Naive thymus-derived CD4-positive, alpha-beta T cell (primary cell): ENCODE measurements at regions of chr6 and their contacts with region 1.

Region 1: DNA sequence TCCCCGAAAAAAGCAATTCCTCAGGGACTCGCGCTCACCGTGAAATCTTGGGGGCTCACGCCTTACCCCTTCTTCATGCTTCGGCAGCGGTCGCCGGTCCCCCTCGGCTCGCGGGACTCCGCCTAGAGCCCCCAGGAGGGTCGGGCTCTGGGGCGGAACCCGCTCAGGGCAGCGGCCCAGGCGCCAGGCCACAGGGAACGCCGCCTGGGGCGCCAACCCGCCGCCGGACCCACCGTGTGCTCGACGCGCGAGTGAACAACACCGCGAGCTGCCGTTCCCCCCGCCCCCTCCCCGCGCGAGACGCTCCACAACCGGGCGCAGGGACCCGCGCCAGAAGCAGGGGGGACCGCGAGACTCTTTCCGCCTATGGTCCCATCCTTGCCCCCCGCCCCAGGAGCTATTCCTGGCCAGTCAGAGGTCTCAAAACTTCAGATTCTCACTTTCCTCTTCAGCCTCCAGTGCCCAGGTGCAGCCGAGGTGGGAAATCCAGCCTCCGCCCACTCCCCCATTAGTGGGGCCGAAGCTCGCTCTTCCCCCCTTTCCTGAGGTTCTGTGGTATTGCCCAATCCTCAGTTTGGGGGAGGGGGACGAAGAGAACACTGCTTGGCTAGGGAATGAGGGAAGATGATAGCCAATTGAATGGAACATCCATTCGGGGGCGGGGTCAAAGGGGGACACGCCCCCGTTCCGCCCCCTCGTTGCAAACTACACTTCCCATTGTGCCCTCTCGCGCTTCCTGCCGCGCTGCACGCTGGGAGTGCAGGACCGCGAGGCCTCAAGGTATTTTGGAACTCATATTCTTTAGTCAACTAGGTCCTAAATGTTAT is at the start of gene WASF1:
- DNase-seq: peak; percentile 84 to 94 (median 91)
- ATAC-seq: peak; percentile 96
- H3K4me3 ChIP-seq: peak within 1 kb of the TSS; percentile 83
- H3K4me3 Mint-ChIP-seq: peak within 1 kb of the TSS in 6 of 10 donors; percentile 84 to 90 (median 88)
- H3K27ac ChIP-seq: peak within 1 kb of the TSS; percentile 90
- H3K27ac Mint-ChIP-seq: peak within 1 kb of the TSS in 8 of 9 donors; percentile 2 to 87 (median 66)
- H3K4me1 ChIP-seq: peaks cover 17 to 23% of the 10 kb centered on the region in 2 donors
- H3K4me1 Mint-ChIP-seq: peaks cover 4 to 8% (median 5%) of the 10 kb centered on the region in 7 donors
- H3K27me3 ChIP-seq: peaks cover 0 to 7% of the 10 kb centered on the region in 2 donors
- H3K27me3 Mint-ChIP-seq: peaks cover 8 to 21% (median 9%) of the 10 kb centered on the region in 5 donors
- total RNA-seq, gene WASF1: 0.19 to 4.7 (median 0.51) TPM

Region 2: GRCh38 chr6:108294727-108295625 is 1884.6 kb before region 1 on chr6 and contains the start of gene AFG1L:
- CTCF ChIA-PET with region 1: no interaction called
- POLR2A ChIA-PET with region 1: no interaction called
- intact Hi-C with region 1: loop called in 1 of 2 experiments (anchors 10 kb)
- DNase-seq: peak; percentile 81 to 90 (median 88)
- ATAC-seq: peak; percentile 96
- H3K4me3 ChIP-seq: peak within 1 kb of the TSS; percentile 99
- H3K4me3 Mint-ChIP-seq: peak within 1 kb of the TSS; percentile 93 to 99 (median 98)
- H3K27ac ChIP-seq: peak within 1 kb of the TSS; percentile 88
- H3K27ac Mint-ChIP-seq: peak within 1 kb of the TSS; percentile 95 to 100 (median 99)
- H3K4me1 ChIP-seq: peaks cover 10 to 13% of the 10 kb centered on the region in 2 donors
- H3K4me1 Mint-ChIP-seq: peaks cover 11 to 37% (median 26%) of the 10 kb centered on the region in 7 donors
- H3K27me3 ChIP-seq: no peaks in the 10 kb centered on the region
- H3K27me3 Mint-ChIP-seq: peaks cover 0 to 3% (median 0%) of the 10 kb centered on the region in 5 donors
- total RNA-seq, gene AFG1L: 4.1 to 9.2 (median 7.2) TPM

Region 3: DNA sequence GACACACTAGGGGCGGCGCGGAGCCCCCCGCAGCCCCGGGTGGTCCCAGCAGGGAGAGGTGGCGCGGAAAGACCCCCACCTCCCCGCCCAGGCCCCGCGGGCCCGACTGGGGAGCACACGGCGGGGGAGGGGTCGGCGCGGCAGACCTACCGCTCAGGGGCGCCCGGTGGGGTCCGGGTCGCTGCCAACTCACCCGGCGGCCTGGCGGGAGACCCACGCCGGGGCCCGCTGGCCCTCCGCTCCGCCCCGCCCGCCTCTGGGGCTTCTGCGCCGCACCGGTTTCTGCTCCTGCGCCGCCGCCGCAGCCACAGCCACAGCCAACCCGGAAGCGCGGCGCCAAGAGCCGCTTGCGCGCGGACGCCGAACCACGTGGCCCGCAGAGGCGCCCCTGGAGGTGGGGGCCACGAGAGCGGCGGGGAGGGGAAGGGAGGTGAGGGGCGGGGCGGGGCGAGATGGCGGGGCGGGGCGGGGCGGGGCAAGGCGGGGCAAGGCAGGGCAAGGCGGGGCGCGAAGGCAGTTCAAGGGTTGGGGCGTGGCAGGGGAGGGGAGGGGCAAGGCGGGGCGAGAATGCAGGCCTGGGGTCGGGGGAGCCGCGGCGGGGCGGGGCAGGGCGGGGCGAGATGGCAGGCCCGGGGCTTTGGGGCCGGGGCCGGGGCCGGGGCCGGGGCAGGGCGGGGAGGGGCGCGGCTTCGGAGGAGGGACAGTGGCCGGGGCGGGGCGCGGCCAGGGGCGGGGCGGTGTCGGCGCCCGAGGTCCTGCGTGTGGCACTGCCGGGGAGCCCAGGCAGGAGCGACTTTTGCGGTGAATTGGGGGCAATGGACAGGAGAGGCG is 696.5 kb before region 1 on chr6 and contains the start of gene ZBTB24:
- CTCF ChIA-PET with region 1: no interaction called
- POLR2A ChIA-PET with region 1: interaction called, 3 read pairs
- intact Hi-C with region 1: loop called (anchors 1 to 2 kb)
- DNase-seq: peak; percentile 86 to 92 (median 89)
- ATAC-seq: peak; percentile 94
- H3K4me3 ChIP-seq: peak within 1 kb of the TSS; percentile 79
- H3K4me3 Mint-ChIP-seq: peak within 1 kb of the TSS; percentile 92 to 99 (median 97)
- H3K27ac ChIP-seq: peak within 1 kb of the TSS; percentile 84
- H3K27ac Mint-ChIP-seq: peak within 1 kb of the TSS; percentile 42 to 95 (median 91)
- H3K4me1 ChIP-seq: peaks cover 38 to 39% of the 10 kb centered on the region in 2 donors
- H3K4me1 Mint-ChIP-seq: peaks cover 38 to 55% (median 51%) of the 10 kb centered on the region in 7 donors
- H3K27me3 ChIP-seq: no peaks in the 10 kb centered on the region
- H3K27me3 Mint-ChIP-seq: peaks cover 0 to 7% (median 0%) of the 10 kb centered on the region in 5 donors
- total RNA-seq, gene ZBTB24: 10.2 to 26.6 (median 23.4) TPM

Region 4: GRCh38 chr6:109853426-109853825 is 326.2 kb before region 1 on chr6:
- CTCF ChIA-PET with region 1: no interaction called
- POLR2A ChIA-PET with region 1: no interaction called
- intact Hi-C with region 1: no loop called
- DNase-seq: no peak
- ATAC-seq: no peak
- H3K4me3 ChIP-seq: no peak overlapping the region
- H3K4me3 Mint-ChIP-seq: no peak overlapping the region
- H3K27ac ChIP-seq: no peak overlapping the region
- H3K27ac Mint-ChIP-seq: no peak overlapping the region
- H3K4me1 ChIP-seq: no peaks in the 10 kb centered on the region
- H3K4me1 Mint-ChIP-seq: no peaks in the 10 kb centered on the region
- H3K27me3 ChIP-seq: no peaks in the 10 kb centered on the region
- H3K27me3 Mint-ChIP-seq: no peaks in the 10 kb centered on the region

Region 5: GRCh38 chr6:110201151-110201884 is 21.7 kb after region 1 on chr6:
- CTCF ChIA-PET with region 1: interaction called, 4 read pairs
- POLR2A ChIA-PET with region 1: no interaction called
- intact Hi-C with region 1: loop called in 1 of 2 experiments (anchors 2 kb)
- DNase-seq: no peak
- ATAC-seq: no peak
- H3K4me3 ChIP-seq: no peak overlapping the region
- H3K4me3 Mint-ChIP-seq: no peak overlapping the region
- H3K27ac ChIP-seq: no peak overlapping the region
- H3K27ac Mint-ChIP-seq: no peak overlapping the region
- H3K4me1 ChIP-seq: no peaks in the 10 kb centered on the region
- H3K4me1 Mint-ChIP-seq: peaks cover 3 to 48% (median 32%) of the 10 kb centered on the region in 7 donors
- H3K27me3 ChIP-seq: no peaks in the 10 kb centered on the region
- H3K27me3 Mint-ChIP-seq: no peaks in the 10 kb centered on the region

Region 6: GRCh38 chr6:110389689-110390382 is 210.2 kb after region 1 on chr6:
- CTCF ChIA-PET with region 1: interaction called, 11 read pairs
- POLR2A ChIA-PET with region 1: interaction called, 5 read pairs
- intact Hi-C with region 1: loop called (anchors 1 kb)
- DNase-seq: no peak
- ATAC-seq: peak; percentile 67
- H3K4me3 ChIP-seq: no peak overlapping the region
- H3K4me3 Mint-ChIP-seq: peak overlapping the region in 1 of 10 donors; percentile 32
- H3K27ac ChIP-seq: no peak overlapping the region
- H3K27ac Mint-ChIP-seq: peak overlapping the region in 6 of 9 donors; percentile 7 to 85 (median 54)
- H3K4me1 ChIP-seq: peaks cover 0 to 3% of the 10 kb centered on the region in 2 donors
- H3K4me1 Mint-ChIP-seq: peaks cover 9 to 27% (median 23%) of the 10 kb centered on the region in 7 donors
- H3K27me3 ChIP-seq: no peaks in the 10 kb centered on the region
- H3K27me3 Mint-ChIP-seq: no peaks in the 10 kb centered on the region

Region 7: DNA sequence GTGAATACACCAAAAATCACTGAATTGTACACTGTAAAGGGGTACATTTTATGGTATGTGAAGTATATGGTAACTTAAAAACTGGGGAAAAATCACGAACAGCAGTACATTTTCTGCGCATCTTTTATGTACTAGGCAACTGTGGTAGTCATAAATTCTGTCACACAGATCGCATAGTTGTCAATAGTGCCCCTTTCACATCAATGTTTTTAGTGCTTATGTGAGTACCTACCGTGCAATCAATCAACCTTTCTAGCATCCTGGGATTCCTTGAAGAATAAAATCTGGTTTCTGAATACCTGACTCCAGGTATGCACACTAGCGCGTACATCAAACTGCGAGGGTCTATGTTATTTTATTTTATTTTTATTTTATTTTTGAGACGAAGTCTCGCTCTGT is 801.6 kb after region 1 on chr6:
- CTCF ChIA-PET with region 1: no interaction called
- POLR2A ChIA-PET with region 1: interaction called, 4 read pairs
- intact Hi-C with region 1: loop called (anchors 1 kb)
- DNase-seq: peak in 1 of 9 donors; percentile 28
- ATAC-seq: no peak
- H3K4me3 ChIP-seq: peak overlapping the region; percentile 81
- H3K4me3 Mint-ChIP-seq: peak overlapping the region; percentile 95 to 99 (median 98)
- H3K27ac ChIP-seq: peak overlapping the region; percentile 92
- H3K27ac Mint-ChIP-seq: peak overlapping the region; percentile 96 to 100 (median 99)
- H3K4me1 ChIP-seq: peaks cover 0 to 11% of the 10 kb centered on the region in 2 donors
- H3K4me1 Mint-ChIP-seq: peaks cover 19 to 46% (median 35%) of the 10 kb centered on the region in 7 donors
- H3K27me3 ChIP-seq: no peaks in the 10 kb centered on the region
- H3K27me3 Mint-ChIP-seq: no peaks in the 10 kb centered on the region